CD4-positive, alpha-beta T cell (primary cell): ENCODE measurements at regions of chr12 and their contacts with region 1.

Region 1: DNA sequence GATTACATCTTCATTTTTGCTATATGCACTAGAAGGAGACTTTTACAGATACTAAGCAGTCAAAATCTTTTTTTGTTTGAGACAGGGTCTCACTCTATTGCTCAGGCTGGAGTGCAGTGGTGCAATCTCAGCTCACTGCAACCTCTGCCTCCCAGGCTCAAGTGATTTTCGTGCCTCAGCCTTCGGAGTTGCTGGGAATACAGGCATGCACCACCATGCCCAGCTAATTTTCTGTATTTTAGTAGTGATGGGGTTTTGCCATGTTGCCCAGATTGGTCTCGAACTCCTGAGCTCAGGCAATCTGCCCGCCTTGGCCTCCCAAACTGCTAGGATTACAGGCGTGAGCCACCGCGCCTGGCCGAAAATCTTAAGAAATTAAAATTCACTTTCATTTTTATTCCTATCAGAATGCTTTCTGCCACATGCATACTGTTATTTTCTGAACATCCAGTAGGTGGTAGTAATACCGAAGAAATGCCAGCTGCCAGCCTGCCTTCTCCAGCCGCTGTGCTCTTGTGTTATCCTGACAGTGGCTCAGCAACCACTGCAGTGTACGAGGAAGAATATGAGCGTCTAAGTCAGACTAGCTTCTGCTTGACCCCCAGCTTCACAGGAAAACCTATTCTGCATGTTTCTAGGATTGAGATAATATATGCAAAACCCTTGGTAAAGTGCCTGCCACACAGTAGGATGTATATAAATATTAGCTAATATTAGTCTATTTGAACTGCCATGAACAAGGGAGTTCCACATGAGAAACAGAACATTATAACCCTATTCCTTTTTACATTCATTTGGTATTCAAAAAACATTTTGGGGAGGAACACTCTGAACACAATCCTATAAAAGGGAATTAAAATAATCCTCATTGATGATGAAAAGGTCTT is 54.2 kb downstream of the RPAP3 start:
- DNase-seq: peak; percentile 19 to 80 (median 34)
- ATAC-seq: peak; percentile 97
- H3K4me3 ChIP-seq: peak overlapping the region; percentile 3
- H3K4me3 Mint-ChIP-seq: peak overlapping the region; percentile 43
- H3K27ac ChIP-seq: no peak overlapping the region
- H3K27ac Mint-ChIP-seq: no peak overlapping the region
- H3K4me1 ChIP-seq: peaks cover 9% of the 10 kb centered on the region
- H3K4me1 Mint-ChIP-seq: peaks cover 9% of the 10 kb centered on the region
- H3K27me3 ChIP-seq: no peaks in the 10 kb centered on the region
- H3K27me3 Mint-ChIP-seq: no peaks in the 10 kb centered on the region
- CTCF ChIP-seq: peak; percentile 72

Region 2: GRCh38 chr12:47188576-47189441 is 462.8 kb before region 1 on chr12:
- CTCF ChIA-PET with region 1: no interaction called
- POLR2A ChIA-PET with region 1: no interaction called
- intact Hi-C with region 1: no loop called
- DNase-seq: no peak
- ATAC-seq: no peak
- H3K4me3 ChIP-seq: no peak overlapping the region
- H3K4me3 Mint-ChIP-seq: no peak overlapping the region
- H3K27ac ChIP-seq: no peak overlapping the region
- H3K27ac Mint-ChIP-seq: peak overlapping the region; percentile 87
- H3K4me1 ChIP-seq: peaks cover 49% of the 10 kb centered on the region
- H3K4me1 Mint-ChIP-seq: peaks cover 84% of the 10 kb centered on the region
- H3K27me3 ChIP-seq: no peaks in the 10 kb centered on the region
- H3K27me3 Mint-ChIP-seq: no peaks in the 10 kb centered on the region
- CTCF ChIP-seq: no peak

Region 3: GRCh38 chr12:47636908-47637780 is 14.5 kb before region 1 on chr12:
- CTCF ChIA-PET with region 1: no interaction called
- POLR2A ChIA-PET with region 1: no interaction called
- intact Hi-C with region 1: no loop called
- DNase-seq: peak in 7 of 14 experiments; percentile 9 to 57 (median 26)
- ATAC-seq: no peak
- H3K4me3 ChIP-seq: no peak overlapping the region
- H3K4me3 Mint-ChIP-seq: no peak overlapping the region
- H3K27ac ChIP-seq: no peak overlapping the region
- H3K27ac Mint-ChIP-seq: no peak overlapping the region
- H3K4me1 ChIP-seq: peaks cover 5% of the 10 kb centered on the region
- H3K4me1 Mint-ChIP-seq: no peaks in the 10 kb centered on the region
- H3K27me3 ChIP-seq: no peaks in the 10 kb centered on the region
- H3K27me3 Mint-ChIP-seq: no peaks in the 10 kb centered on the region
- CTCF ChIP-seq: peak; percentile 34

Region 4: GRCh38 chr12:47686645-47687240 is 35.1 kb after region 1 on chr12:
- CTCF ChIA-PET with region 1: interaction called, 7 read pairs
- POLR2A ChIA-PET with region 1: interaction called, 4 read pairs
- intact Hi-C with region 1: loop called (anchors 2 to 5 kb)
- DNase-seq: peak in 6 of 14 experiments; percentile 1 to 61 (median 31)
- ATAC-seq: peak; percentile 76
- H3K4me3 ChIP-seq: no peak overlapping the region
- H3K4me3 Mint-ChIP-seq: no peak overlapping the region
- H3K27ac ChIP-seq: no peak overlapping the region
- H3K27ac Mint-ChIP-seq: no peak overlapping the region
- H3K4me1 ChIP-seq: no peaks in the 10 kb centered on the region
- H3K4me1 Mint-ChIP-seq: peaks cover 10% of the 10 kb centered on the region
- H3K27me3 ChIP-seq: no peaks in the 10 kb centered on the region
- H3K27me3 Mint-ChIP-seq: no peaks in the 10 kb centered on the region
- CTCF ChIP-seq: peak; percentile 58

Region 5: DNA sequence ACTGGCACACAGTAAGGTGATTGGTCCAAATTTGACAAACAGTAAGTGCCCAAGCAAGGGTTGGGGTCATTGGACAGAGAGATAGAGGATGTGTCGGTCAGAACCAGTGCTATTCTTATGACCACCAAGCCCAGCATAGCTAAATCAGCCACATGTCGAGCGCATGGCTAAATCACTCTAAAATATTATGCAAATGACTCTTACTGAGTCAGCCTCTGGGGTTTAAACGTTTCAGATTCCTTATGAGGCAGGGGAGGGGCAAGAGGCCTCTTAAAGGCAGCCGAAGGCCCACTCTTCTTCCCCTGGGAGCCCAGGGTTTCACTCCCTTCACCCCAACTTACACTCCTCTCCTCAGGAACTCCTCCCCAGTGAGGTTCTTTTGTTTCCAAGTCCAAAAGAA is 74.3 kb after region 1 on chr12:
- CTCF ChIA-PET with region 1: no interaction called
- POLR2A ChIA-PET with region 1: no interaction called
- intact Hi-C with region 1: no loop called
- DNase-seq: no peak
- ATAC-seq: no peak
- H3K4me3 ChIP-seq: no peak overlapping the region
- H3K4me3 Mint-ChIP-seq: no peak overlapping the region
- H3K27ac ChIP-seq: no peak overlapping the region
- H3K27ac Mint-ChIP-seq: no peak overlapping the region
- H3K4me1 ChIP-seq: peaks cover 6% of the 10 kb centered on the region
- H3K4me1 Mint-ChIP-seq: peaks cover 9% of the 10 kb centered on the region
- H3K27me3 ChIP-seq: no peaks in the 10 kb centered on the region
- H3K27me3 Mint-ChIP-seq: no peaks in the 10 kb centered on the region
- CTCF ChIP-seq: no peak

Region 6: DNA sequence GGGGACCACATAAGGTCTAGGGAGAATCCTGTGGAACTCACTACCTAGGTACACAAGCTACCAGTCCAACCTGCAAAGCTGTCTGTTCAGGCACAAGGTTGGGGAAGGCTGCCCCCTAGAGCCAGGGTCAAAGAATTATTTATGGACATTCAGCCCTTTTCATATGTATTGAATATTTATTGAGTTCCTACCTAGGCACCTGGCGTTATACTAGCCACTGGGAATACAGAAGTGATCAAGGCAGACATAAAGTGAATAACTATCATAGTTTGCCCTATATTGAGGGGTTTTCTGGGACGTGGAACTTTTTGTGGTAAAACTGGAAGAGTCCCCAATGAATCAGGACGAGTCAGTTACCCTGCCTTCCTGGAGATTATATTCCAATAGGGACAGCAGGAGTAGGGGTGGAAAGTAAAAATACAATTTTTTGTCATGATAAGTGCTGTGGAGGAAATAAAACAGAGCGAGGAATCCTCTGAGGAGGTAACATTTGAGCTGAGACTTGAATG is 115.7 kb after region 1 on chr12:
- CTCF ChIA-PET with region 1: no interaction called
- POLR2A ChIA-PET with region 1: no interaction called
- intact Hi-C with region 1: loop called in 1 of 2 experiments (anchors 5 kb)
- DNase-seq: peak; percentile 48 to 86 (median 67)
- ATAC-seq: peak; percentile 80
- H3K4me3 ChIP-seq: no peak overlapping the region
- H3K4me3 Mint-ChIP-seq: no peak overlapping the region
- H3K27ac ChIP-seq: no peak overlapping the region
- H3K27ac Mint-ChIP-seq: no peak overlapping the region
- H3K4me1 ChIP-seq: peaks cover 9% of the 10 kb centered on the region
- H3K4me1 Mint-ChIP-seq: peaks cover 19% of the 10 kb centered on the region
- H3K27me3 ChIP-seq: no peaks in the 10 kb centered on the region
- H3K27me3 Mint-ChIP-seq: no peaks in the 10 kb centered on the region
- CTCF ChIP-seq: peak; percentile 31

Region 7: GRCh38 chr12:47808050-47808449 is 156.4 kb after region 1 on chr12:
- CTCF ChIA-PET with region 1: no interaction called
- POLR2A ChIA-PET with region 1: no interaction called
- intact Hi-C with region 1: no loop called
- DNase-seq: peak; percentile 50 to 94 (median 75)
- ATAC-seq: peak; percentile 32
- H3K4me3 ChIP-seq: peak overlapping the region; percentile 37
- H3K4me3 Mint-ChIP-seq: peak overlapping the region; percentile 66
- H3K27ac ChIP-seq: peak overlapping the region; percentile 91 to 98
- H3K27ac Mint-ChIP-seq: peak overlapping the region; percentile 96
- H3K4me1 ChIP-seq: peaks cover 99% of the 10 kb centered on the region
- H3K4me1 Mint-ChIP-seq: peaks cover 99% of the 10 kb centered on the region
- H3K27me3 ChIP-seq: no peaks in the 10 kb centered on the region
- H3K27me3 Mint-ChIP-seq: no peaks in the 10 kb centered on the region
- CTCF ChIP-seq: no peak

Region 8: GRCh38 chr12:47844274-47845019 is 192.8 kb after region 1 on chr12:
- CTCF ChIA-PET with region 1: no interaction called
- POLR2A ChIA-PET with region 1: no interaction called
- intact Hi-C with region 1: loop called in 1 of 2 experiments (anchors 2 kb)
- DNase-seq: no peak
- ATAC-seq: no peak
- H3K4me3 ChIP-seq: no peak overlapping the region
- H3K4me3 Mint-ChIP-seq: no peak overlapping the region
- H3K27ac ChIP-seq: no peak overlapping the region
- H3K27ac Mint-ChIP-seq: no peak overlapping the region
- H3K4me1 ChIP-seq: no peaks in the 10 kb centered on the region
- H3K4me1 Mint-ChIP-seq: no peaks in the 10 kb centered on the region
- H3K27me3 ChIP-seq: no peaks in the 10 kb centered on the region
- H3K27me3 Mint-ChIP-seq: no peaks in the 10 kb centered on the region
- CTCF ChIP-seq: no peak